ENCODE measurements at regions of chr1 and their contacts with region 1.

Region 1: DNA sequence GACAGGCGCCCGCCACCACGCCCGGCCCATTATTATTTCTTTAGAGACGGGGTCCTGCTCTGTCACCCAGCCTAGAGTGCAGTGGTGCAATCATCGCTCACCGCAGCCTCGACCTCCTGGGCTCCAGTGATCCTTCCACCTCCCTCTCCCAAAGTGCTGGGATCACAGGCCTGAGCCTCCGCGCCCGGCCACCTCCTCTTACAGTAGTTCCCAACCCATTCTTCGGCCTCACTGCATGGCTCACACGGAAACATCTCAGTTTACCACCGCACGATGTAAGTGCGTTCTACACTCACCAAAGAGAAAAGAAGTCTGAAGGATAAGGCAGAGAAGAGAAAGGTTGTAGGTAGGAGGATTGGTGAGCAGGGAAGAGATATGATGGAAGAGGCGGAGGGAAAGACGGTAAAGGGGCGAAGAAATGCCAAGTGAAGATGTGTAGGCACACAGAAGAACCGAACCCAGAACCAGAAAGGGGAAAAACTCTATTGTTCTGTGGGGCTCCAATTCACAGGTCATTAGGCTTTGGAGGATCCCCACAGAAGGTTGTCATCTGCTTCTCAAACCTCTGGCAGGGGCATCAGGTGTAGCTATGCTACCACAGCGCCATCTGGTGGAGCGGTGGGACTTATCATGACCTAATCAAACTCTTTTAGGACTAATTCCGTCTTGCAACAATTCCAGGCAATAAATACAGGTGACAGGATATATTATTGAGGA is 504.2 kb downstream of the SMYD3 start:
- DNase-seq: peak; percentile 96
- H3K4me3 Mint-ChIP-seq: no peak overlapping the region
- H3K27ac Mint-ChIP-seq: no peak overlapping the region
- H3K4me1 Mint-ChIP-seq: peaks cover 53% of the 10 kb centered on the region
- H3K27me3 Mint-ChIP-seq: no peaks in the 10 kb centered on the region
- CTCF ChIP-seq: peak; percentile 99

Region 2: GRCh38 chr1:245079021-245079609 is 923.8 kb before region 1 on chr1:
- CTCF ChIA-PET with region 1: interaction called, 5 read pairs
- POLR2A ChIA-PET with region 1: no interaction called
- intact Hi-C with region 1: loop called (anchors 1 kb)
- DNase-seq: peak; percentile 73
- H3K4me3 Mint-ChIP-seq: no peak overlapping the region
- H3K27ac Mint-ChIP-seq: no peak overlapping the region
- H3K4me1 Mint-ChIP-seq: peaks cover 4% of the 10 kb centered on the region
- H3K27me3 Mint-ChIP-seq: no peaks in the 10 kb centered on the region
- CTCF ChIP-seq: peak; percentile 97

Region 3: GRCh38 chr1:245380790-245381535 is 621.9 kb before region 1 on chr1:
- CTCF ChIA-PET with region 1: no interaction called
- POLR2A ChIA-PET with region 1: no interaction called
- intact Hi-C with region 1: loop called (anchors 10 kb)
- DNase-seq: no peak
- H3K4me3 Mint-ChIP-seq: no peak overlapping the region
- H3K27ac Mint-ChIP-seq: no peak overlapping the region
- H3K4me1 Mint-ChIP-seq: no peaks in the 10 kb centered on the region
- H3K27me3 Mint-ChIP-seq: peaks cover 36% of the 10 kb centered on the region
- CTCF ChIP-seq: no peak

Region 4: GRCh38 chr1:245512980-245513578 is 489.8 kb before region 1 on chr1:
- CTCF ChIA-PET with region 1: no interaction called
- POLR2A ChIA-PET with region 1: no interaction called
- intact Hi-C with region 1: loop called (anchors 1 kb)
- DNase-seq: no peak
- H3K4me3 Mint-ChIP-seq: no peak overlapping the region
- H3K27ac Mint-ChIP-seq: no peak overlapping the region
- H3K4me1 Mint-ChIP-seq: peaks cover 9% of the 10 kb centered on the region
- H3K27me3 Mint-ChIP-seq: peaks cover 67% of the 10 kb centered on the region
- CTCF ChIP-seq: peak; percentile 6

Region 5: GRCh38 chr1:245715970-245716369 is 286.9 kb before region 1 on chr1:
- CTCF ChIA-PET with region 1: interaction called, 5 read pairs
- POLR2A ChIA-PET with region 1: no interaction called
- intact Hi-C with region 1: loop called (anchors 5 kb)
- DNase-seq: peak; percentile 95
- H3K4me3 Mint-ChIP-seq: no peak overlapping the region
- H3K27ac Mint-ChIP-seq: peak overlapping the region; percentile 77
- H3K4me1 Mint-ChIP-seq: peaks cover 30% of the 10 kb centered on the region
- H3K27me3 Mint-ChIP-seq: no peaks in the 10 kb centered on the region
- CTCF ChIP-seq: no peak

Region 6: GRCh38 chr1:245953876-245954660 is 48.8 kb before region 1 on chr1:
- CTCF ChIA-PET with region 1: no interaction called
- POLR2A ChIA-PET with region 1: no interaction called
- intact Hi-C with region 1: no loop called
- DNase-seq: peak; percentile 36
- H3K4me3 Mint-ChIP-seq: peak overlapping the region; percentile 33
- H3K27ac Mint-ChIP-seq: peak overlapping the region; percentile 75
- H3K4me1 Mint-ChIP-seq: peaks cover 6% of the 10 kb centered on the region
- H3K27me3 Mint-ChIP-seq: no peaks in the 10 kb centered on the region
- CTCF ChIP-seq: no peak

Region 7: DNA sequence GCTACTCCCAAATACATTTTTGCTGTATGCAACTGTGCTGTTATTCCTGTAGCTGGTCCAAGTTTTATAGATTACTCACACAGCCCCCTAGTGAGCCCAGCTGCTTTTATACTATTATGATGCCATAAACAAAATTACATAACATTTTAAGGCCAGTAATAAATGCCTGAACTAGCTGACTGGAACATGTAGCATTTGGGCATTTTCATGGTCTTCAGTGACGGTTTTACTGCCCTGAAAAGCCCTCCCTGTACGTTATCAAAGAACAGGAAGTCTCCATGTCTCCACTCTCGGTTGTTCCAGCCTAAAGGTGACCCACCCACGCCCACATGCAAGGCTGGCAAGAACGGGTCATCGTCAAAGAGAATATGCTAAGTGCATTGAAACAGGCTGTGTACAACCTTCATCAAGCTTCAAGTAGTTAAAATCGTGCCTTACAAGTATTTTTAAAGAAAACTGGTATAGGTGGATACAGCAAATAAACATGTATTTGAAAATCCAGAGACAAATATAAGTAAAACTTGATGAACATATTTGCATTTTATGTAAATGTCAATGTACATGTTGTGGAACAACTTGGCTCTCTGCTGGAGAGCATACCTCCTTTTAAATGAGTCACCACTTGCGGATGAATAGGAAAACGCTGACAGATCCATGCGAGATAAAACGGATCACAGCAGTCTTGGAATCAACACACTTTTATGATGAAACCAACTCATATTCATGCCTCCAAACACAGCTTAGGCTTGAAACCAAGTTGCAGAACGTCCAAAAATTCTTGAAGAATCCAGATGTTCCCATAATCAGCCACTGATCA is 16.3 kb before region 1 on chr1:
- CTCF ChIA-PET with region 1: interaction called, 10 read pairs
- POLR2A ChIA-PET with region 1: interaction called, 10 read pairs
- intact Hi-C with region 1: no loop called
- DNase-seq: peak; percentile 93
- H3K4me3 Mint-ChIP-seq: peak overlapping the region; percentile 12
- H3K27ac Mint-ChIP-seq: peak overlapping the region; percentile 4
- H3K4me1 Mint-ChIP-seq: peaks cover 21% of the 10 kb centered on the region
- H3K27me3 Mint-ChIP-seq: no peaks in the 10 kb centered on the region
- CTCF ChIP-seq: no peak

Region 8: DNA sequence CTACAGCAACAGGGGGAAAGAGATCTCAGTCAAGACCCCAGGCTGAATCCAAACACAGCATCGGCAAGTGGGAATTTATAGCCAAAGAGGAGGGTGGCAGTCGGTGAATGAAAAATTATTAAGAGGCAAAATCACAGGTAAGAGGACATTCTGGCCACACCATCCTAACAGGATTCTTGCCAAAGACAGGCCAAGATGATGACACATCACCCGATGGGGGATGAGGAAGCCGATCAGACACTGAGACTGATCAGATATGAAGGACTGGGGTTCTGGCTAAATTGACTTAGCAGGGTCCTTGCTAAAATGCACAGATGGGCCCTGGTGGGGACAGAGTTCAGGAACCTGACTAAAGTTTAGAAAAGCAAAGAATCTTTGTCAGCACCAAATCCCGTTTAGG is 102.0 kb after region 1 on chr1:
- CTCF ChIA-PET with region 1: no interaction called
- POLR2A ChIA-PET with region 1: no interaction called
- intact Hi-C with region 1: no loop called
- DNase-seq: peak; percentile 63
- H3K4me3 Mint-ChIP-seq: no peak overlapping the region
- H3K27ac Mint-ChIP-seq: no peak overlapping the region
- H3K4me1 Mint-ChIP-seq: peaks cover 5% of the 10 kb centered on the region
- H3K27me3 Mint-ChIP-seq: no peaks in the 10 kb centered on the region
- CTCF ChIP-seq: no peak

Region 9: GRCh38 chr1:246128494-246129069 is 125.7 kb after region 1 on chr1:
- CTCF ChIA-PET with region 1: no interaction called
- POLR2A ChIA-PET with region 1: no interaction called
- intact Hi-C with region 1: no loop called
- DNase-seq: no peak
- H3K4me3 Mint-ChIP-seq: no peak overlapping the region
- H3K27ac Mint-ChIP-seq: no peak overlapping the region
- H3K4me1 Mint-ChIP-seq: no peaks in the 10 kb centered on the region
- H3K27me3 Mint-ChIP-seq: no peaks in the 10 kb centered on the region
- CTCF ChIP-seq: no peak

Region 10: GRCh38 chr1:246769306-246769705 is 766.4 kb after region 1 on chr1:
- CTCF ChIA-PET with region 1: no interaction called
- POLR2A ChIA-PET with region 1: no interaction called
- intact Hi-C with region 1: no loop called
- DNase-seq: peak; percentile 99
- H3K4me3 Mint-ChIP-seq: no peak overlapping the region
- H3K27ac Mint-ChIP-seq: peak overlapping the region; percentile 92
- H3K4me1 Mint-ChIP-seq: peaks cover 18% of the 10 kb centered on the region
- H3K27me3 Mint-ChIP-seq: no peaks in the 10 kb centered on the region
- CTCF ChIP-seq: no peak

Measured in MCF 10A (cell line).